PC-9 (cell line): ENCODE measurements at regions of chr7 and their contacts with region 1.

Region 1: DNA sequence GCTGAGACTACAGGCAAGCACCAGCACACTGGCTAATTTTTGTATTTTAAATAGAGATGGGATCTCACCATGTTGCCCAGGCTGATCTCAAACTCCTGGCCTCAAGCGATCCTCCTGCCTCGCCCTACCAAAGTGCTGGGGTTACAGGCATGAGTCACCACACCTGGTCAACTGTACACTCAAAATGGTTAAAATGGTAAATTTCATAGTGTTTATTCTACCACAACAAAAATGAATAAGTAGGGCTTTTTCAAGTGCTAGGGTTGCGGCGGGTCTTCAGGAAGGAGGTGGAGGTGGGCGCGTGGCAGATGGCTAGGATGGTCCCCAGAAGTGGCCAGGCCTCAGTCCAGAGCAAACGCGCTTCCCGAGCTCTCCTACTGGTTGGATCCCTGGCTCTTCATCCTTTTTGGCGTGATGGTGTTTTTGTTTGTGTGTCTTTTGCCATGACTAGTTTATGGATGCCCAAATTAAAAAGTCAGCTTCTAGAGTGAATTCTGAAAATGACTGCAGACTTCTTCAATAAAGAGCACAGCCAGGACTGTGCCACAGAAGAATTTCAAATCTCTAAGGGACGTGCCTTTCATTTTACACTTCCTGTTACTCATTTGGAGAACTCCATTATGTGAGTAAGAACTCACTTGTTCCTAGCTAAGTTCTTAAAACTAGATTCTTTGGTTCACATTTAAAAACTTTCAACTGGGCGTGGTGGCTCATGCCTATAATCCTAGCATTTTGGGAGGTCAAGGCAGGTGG is 73.9 kb downstream of the TMEM130 start:
- DNase-seq: peak in 1 of 2 experiments; percentile 49
- H3K4me3 ChIP-seq: no peak overlapping the region
- H3K27ac ChIP-seq: no peak overlapping the region; the same call in 1 of the 2 replicates
- H3K4me1 ChIP-seq: peaks cover 29% of the 10 kb centered on the region
- H3K27me3 ChIP-seq: no peaks in the 10 kb centered on the region
- CTCF ChIP-seq: no peak

Region 2: DNA sequence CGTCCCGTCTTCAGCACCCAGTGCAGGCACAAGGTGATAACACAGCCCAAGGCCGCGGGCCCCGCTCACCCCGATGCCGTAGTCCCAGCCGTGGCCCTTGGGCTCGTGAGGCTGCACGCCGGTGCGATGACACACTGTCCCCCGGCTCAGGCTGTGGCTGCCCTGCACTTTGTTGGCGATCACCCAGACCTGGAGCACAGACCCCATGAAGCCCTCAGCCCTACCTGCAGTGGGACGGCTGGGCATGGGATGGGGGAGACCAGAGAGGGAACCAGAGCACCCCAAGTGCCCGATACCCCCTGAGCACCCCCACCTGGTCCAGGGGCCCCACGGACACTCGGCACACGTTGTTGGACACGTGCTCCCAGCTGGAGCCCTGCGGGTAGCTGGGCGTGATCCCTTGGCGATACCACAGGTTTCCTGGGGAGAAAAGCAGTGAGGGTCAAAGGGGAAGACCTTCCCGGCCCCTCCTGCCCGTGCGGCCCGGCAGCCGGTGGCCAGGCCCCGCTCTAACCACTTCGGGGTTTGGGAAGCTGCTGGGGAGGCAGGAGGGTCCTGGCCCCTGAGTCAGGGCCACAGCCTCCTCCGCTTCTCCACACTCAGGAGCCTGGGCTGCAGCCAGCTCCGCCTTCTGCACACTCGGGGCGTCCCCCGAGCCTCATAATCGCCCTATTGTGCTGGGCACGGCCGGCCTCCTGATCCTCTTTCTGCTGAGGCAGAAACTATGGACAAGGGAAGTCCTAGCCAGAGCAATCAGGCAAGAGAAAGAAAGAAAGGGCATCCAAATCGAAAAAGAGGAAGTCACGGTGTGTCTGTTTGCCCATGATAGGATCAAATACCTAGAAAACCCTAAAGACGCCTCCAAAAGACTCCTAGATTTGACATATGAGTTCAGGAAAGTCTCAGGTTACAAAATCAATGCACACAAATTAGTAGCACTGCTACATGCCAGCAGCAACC is 578.0 kb before region 1 on chr7:
- CTCF ChIA-PET with region 1: no interaction called
- POLR2A ChIA-PET with region 1: no interaction called
- intact Hi-C with region 1: no loop called
- DNase-seq: no peak
- H3K4me3 ChIP-seq: no peak overlapping the region
- H3K27ac ChIP-seq: no peak overlapping the region
- H3K4me1 ChIP-seq: no peaks in the 10 kb centered on the region
- H3K27me3 ChIP-seq: no peaks in the 10 kb centered on the region
- CTCF ChIP-seq: no peak

Region 3: GRCh38 chr7:98779800-98780587 is 15.9 kb before region 1 on chr7:
- CTCF ChIA-PET with region 1: interaction called, 5 read pairs
- POLR2A ChIA-PET with region 1: no interaction called
- intact Hi-C with region 1: loop called (anchors 2 kb)
- DNase-seq: no peak
- H3K4me3 ChIP-seq: no peak overlapping the region
- H3K27ac ChIP-seq: no peak overlapping the region
- H3K4me1 ChIP-seq: peaks cover 17% of the 10 kb centered on the region
- H3K27me3 ChIP-seq: no peaks in the 10 kb centered on the region
- CTCF ChIP-seq: no peak

Region 4: GRCh38 chr7:98823226-98823625 is 27.3 kb after region 1 on chr7:
- CTCF ChIA-PET with region 1: no interaction called
- POLR2A ChIA-PET with region 1: no interaction called
- intact Hi-C with region 1: loop called (anchors 2 kb)
- DNase-seq: no peak
- H3K4me3 ChIP-seq: no peak overlapping the region
- H3K27ac ChIP-seq: no peak overlapping the region
- H3K4me1 ChIP-seq: peaks cover 10% of the 10 kb centered on the region
- H3K27me3 ChIP-seq: no peaks in the 10 kb centered on the region
- CTCF ChIP-seq: no peak

Region 5: DNA sequence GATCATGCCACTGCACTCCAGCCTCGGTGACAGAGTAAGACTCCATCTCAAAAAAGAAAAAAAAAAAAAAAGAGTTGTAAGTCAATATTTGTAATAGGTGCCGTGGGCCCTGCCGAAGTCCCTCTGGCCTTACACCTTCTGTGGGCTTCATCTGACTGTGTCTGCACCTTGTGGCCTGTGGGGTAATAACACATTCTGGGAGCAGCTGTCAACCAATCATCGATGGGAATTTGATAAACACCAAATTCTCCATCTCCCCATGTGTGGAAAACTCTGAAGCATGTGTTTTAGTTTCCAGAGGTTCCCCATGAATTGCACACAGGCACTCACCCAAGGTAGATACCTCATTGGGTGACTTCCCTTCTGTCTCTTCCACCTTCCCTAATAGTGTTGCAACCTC is 693.3 kb after region 1 on chr7:
- CTCF ChIA-PET with region 1: no interaction called
- POLR2A ChIA-PET with region 1: interaction called, 20 read pairs
- intact Hi-C with region 1: no loop called
- DNase-seq: no peak
- H3K4me3 ChIP-seq: no peak overlapping the region
- H3K27ac ChIP-seq: no peak overlapping the region
- H3K4me1 ChIP-seq: no peaks in the 10 kb centered on the region
- H3K27me3 ChIP-seq: no peaks in the 10 kb centered on the region
- CTCF ChIP-seq: no peak

Region 6: DNA sequence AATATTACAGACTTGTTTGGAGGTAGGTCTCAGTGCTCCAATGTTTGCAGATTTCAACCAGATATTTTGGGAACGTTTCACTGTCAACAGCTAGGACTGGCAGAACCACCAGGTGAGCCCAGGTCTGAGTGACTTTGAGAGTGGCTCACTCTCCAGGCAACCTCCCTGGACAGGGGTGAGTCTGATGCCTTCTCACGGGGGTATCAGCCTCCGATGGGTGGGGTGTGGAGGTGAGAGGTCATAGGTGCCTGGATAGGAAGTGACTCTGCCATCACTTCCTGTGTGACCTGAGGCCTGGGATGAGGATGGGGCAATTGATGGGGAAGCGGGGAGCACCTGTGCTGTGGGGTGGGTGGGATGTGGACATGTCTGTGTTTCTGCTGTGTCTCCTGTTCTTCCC is 1175.3 kb after region 1 on chr7:
- CTCF ChIA-PET with region 1: no interaction called
- POLR2A ChIA-PET with region 1: no interaction called
- intact Hi-C with region 1: no loop called
- DNase-seq: no peak
- H3K4me3 ChIP-seq: no peak overlapping the region
- H3K27ac ChIP-seq: no peak overlapping the region
- H3K4me1 ChIP-seq: no peaks in the 10 kb centered on the region
- H3K27me3 ChIP-seq: peaks cover 38% of the 10 kb centered on the region
- CTCF ChIP-seq: no peak